Activated naive CD8-positive, alpha-beta T cell treated with anti-CD3 and anti-CD28 coated beads, Interleukin-2, amount 10 ng/mL, durations not matched to agents 7 days and 5 days (primary cell): ENCODE measurements at regions of chr19 and their contacts with region 1.

Region 1: DNA sequence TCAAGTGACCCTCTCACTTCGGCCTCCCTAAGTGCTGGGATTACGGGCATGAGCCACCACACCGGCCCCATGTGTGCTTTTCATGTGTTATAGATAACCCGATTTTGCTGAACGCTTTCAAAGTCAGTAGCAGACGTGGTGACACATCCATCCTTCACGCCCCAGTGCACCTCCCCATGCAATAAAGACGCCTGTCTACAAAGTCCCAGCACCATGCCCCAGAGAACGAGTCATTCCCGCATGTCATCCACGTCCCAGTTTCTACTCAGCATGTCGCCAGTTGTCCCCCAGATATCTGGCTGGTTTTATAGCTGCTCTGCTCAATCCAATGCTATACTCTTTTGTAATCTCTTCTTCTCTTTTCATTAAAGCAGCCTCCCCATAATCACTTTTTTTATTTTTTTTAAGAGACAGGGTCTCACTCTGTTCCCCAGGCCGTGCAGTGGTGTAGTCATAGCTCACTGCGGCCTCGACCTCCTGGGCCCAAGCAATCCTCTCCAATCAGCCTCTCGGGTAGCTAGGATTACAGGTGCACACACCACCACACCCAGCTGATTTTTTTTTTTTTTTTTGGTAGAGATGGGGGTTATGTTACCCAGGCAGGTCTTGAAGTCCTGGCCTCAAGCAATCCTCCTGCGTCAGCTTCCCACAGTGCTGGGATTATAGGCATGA is 42.5 kb downstream of the DNM2 start:
- DNase-seq: no peak
- ATAC-seq: no peak
- H3K4me3 Mint-ChIP-seq: peak overlapping the region; percentile 75
- H3K27ac Mint-ChIP-seq: peak overlapping the region; percentile 89
- H3K4me1 Mint-ChIP-seq: peaks cover 60% of the 10 kb centered on the region
- H3K27me3 Mint-ChIP-seq: no peaks in the 10 kb centered on the region

Region 2: DNA sequence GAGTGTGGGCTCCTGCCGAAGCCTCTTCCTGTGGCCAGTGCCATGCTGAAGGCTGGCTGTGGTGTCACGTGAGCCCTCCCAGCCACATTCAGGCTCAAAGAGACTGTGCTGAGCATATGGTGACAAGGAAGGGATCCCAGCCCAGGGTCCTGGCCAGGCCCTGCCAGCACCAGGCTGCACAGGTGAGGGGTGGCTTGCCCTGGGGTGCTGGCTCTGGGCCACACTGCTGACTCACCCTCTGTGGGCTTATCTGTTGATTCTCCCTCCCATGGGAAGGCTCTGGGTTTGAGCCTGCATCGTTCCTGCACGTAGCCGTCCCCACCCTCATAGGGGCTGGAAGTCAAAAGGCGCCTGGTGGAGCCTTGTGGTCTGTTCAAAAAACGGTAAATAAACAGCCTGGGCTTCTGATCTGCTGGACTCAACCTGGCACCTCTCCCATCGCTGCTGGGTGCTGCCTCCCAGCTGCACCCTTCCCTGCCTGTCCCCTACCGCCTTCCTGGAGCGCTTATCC is 11.4 kb before region 1 on chr19:
- POLR2A ChIA-PET with region 1: no interaction called
- DNase-seq: no peak
- ATAC-seq: no peak
- H3K4me3 Mint-ChIP-seq: no peak overlapping the region
- H3K27ac Mint-ChIP-seq: peak overlapping the region; percentile 61
- H3K4me1 Mint-ChIP-seq: peaks cover 46% of the 10 kb centered on the region
- H3K27me3 Mint-ChIP-seq: no peaks in the 10 kb centered on the region

Region 3: DNA sequence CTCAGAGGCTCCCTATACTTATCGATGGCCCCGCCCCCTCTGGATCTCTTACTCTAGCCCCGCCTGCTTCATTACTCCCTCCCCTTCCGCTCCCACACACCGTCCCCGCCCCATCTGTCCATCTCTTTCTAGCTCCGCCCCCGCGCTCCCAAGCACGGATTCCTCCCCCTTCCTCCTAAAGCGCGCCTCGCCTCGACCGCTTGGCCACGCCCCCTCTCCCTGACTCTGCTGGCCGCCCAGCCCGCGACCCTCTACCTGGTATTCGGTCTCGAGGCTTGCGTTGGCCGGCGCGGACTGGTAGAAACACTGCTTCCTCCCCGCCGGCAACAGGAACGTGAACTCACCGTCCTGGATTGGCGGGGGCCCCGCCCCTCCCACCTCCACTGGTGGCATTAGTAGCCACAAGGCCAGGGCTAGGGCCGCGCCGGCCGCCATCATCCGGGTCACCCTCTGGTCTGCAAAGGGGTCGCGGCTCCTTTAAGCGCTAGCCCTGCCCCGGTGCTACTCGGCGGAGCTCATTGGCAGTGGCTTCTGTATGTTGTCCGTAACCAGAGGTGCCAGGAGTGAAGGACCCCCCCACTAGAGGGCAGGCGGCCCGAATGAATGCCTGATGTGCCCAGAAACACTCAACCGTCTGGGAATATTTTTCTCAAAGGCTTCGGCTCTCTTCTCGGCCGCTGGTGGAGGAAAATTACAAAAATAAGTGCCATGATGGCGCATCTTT is 75.5 kb after region 1 on chr19 and contains the start of gene TMED1:
- POLR2A ChIA-PET with region 1: interaction called, 13 read pairs
- DNase-seq: peak; percentile 92
- ATAC-seq: peak; percentile 90
- H3K4me3 Mint-ChIP-seq: peak within 1 kb of the TSS; percentile 90
- H3K27ac Mint-ChIP-seq: peak within 1 kb of the TSS; percentile 98
- H3K4me1 Mint-ChIP-seq: peaks cover 14% of the 10 kb centered on the region
- H3K27me3 Mint-ChIP-seq: peaks cover 4% of the 10 kb centered on the region
- total RNA-seq, gene TMED1: 8.6 to 11.8 TPM